ENCODE measurements at regions of chr9 and their contacts with region 1.

Region 1: GRCh38 chr9:111016426-111017045 is 21.7 kb downstream of the LPAR1 start:
- DNase-seq: no peak
- ATAC-seq: peak; percentile 64
- H3K4me3 ChIP-seq: no peak overlapping the region
- H3K27ac ChIP-seq: no peak overlapping the region
- H3K4me1 ChIP-seq: no peaks in the 10 kb centered on the region
- H3K27me3 ChIP-seq: no peaks in the 10 kb centered on the region
- CTCF ChIP-seq: no peak
- EP300 ChIP-seq: no peak
- POLR2A ChIP-seq: no peak
- RAD21 ChIP-seq: no peak

Region 2: DNA sequence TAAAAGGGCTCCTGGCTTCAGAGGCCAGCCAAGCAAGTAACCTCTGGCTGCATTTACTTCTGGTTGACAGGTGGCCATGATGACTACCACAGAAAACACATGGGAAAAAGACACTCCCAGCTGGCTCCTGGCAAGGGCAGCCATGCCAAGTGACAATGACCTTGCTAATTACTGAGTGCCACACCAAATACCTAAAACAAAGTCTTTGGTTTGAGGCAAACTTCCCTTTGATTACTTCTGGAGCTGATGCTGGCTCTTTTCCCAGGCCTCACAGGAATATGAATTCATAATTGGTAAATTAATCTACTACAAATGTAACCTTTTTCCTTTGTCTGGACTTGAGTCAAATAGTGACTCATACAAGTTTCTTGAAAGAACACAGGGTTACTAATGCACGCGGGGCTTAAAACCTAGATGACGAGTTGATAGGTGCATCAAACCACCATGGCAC is 39.3 kb before region 1 on chr9:
- CTCF ChIA-PET with region 1: interaction called, 5 read pairs
- POLR2A ChIA-PET with region 1: no interaction called
- RAD21 ChIA-PET with region 1: interaction called, 3 read pairs
- SMC1A ChIA-PET with region 1: interaction called, 11 read pairs
- in situ Hi-C with region 1: no loop called
- intact Hi-C with region 1: loop called (anchors 5 kb)
- DNase-seq: no peak
- ATAC-seq: peak; percentile 29
- H3K4me3 ChIP-seq: no peak overlapping the region
- H3K27ac ChIP-seq: no peak overlapping the region
- H3K4me1 ChIP-seq: no peaks in the 10 kb centered on the region
- H3K27me3 ChIP-seq: no peaks in the 10 kb centered on the region
- CTCF ChIP-seq: no peak
- EP300 ChIP-seq: no peak
- POLR2A ChIP-seq: no peak
- RAD21 ChIP-seq: no peak

Region 3: GRCh38 chr9:111005746-111006470 is 10.6 kb before region 1 on chr9:
- CTCF ChIA-PET with region 1: interaction called, 25 read pairs
- POLR2A ChIA-PET with region 1: interaction called, 13 read pairs
- RAD21 ChIA-PET with region 1: interaction called, 20 read pairs
- SMC1A ChIA-PET with region 1: interaction called, 124 read pairs
- in situ Hi-C with region 1: no loop called
- intact Hi-C with region 1: no loop called
- DNase-seq: no peak
- ATAC-seq: peak; percentile 59
- H3K4me3 ChIP-seq: no peak overlapping the region
- H3K27ac ChIP-seq: no peak overlapping the region
- H3K4me1 ChIP-seq: no peaks in the 10 kb centered on the region
- H3K27me3 ChIP-seq: no peaks in the 10 kb centered on the region
- CTCF ChIP-seq: no peak
- EP300 ChIP-seq: no peak
- POLR2A ChIP-seq: no peak
- RAD21 ChIP-seq: no peak

Region 4: DNA sequence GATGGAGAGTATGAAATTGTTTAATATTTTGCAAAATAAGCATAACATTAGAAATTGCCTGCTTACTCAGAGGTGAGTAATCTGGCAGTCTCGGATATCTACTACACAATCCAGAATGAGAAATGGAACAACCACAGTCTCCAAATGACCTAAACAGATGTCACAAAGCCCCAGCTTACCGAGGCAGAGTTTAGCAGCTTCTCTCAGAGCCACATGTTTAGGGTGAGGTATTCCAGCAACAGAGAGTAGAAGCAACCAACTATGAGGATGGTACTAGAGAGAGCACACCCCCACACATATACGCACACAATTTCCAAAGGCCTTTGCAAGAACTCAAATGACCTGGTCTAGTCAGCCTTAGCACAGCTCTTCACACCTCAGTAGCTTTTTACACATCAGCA is 144.5 kb after region 1 on chr9:
- CTCF ChIA-PET with region 1: no interaction called
- POLR2A ChIA-PET with region 1: no interaction called
- RAD21 ChIA-PET with region 1: no interaction called
- SMC1A ChIA-PET with region 1: no interaction called
- in situ Hi-C with region 1: no loop called
- intact Hi-C with region 1: no loop called
- DNase-seq: no peak
- ATAC-seq: peak; percentile 67
- H3K4me3 ChIP-seq: no peak overlapping the region
- H3K27ac ChIP-seq: no peak overlapping the region
- H3K4me1 ChIP-seq: no peaks in the 10 kb centered on the region
- H3K27me3 ChIP-seq: no peaks in the 10 kb centered on the region
- CTCF ChIP-seq: no peak
- EP300 ChIP-seq: no peak
- POLR2A ChIP-seq: no peak
- RAD21 ChIP-seq: no peak